ENCODE measurements at regions of chr9 and their contacts with region 1.

Region 1: DNA sequence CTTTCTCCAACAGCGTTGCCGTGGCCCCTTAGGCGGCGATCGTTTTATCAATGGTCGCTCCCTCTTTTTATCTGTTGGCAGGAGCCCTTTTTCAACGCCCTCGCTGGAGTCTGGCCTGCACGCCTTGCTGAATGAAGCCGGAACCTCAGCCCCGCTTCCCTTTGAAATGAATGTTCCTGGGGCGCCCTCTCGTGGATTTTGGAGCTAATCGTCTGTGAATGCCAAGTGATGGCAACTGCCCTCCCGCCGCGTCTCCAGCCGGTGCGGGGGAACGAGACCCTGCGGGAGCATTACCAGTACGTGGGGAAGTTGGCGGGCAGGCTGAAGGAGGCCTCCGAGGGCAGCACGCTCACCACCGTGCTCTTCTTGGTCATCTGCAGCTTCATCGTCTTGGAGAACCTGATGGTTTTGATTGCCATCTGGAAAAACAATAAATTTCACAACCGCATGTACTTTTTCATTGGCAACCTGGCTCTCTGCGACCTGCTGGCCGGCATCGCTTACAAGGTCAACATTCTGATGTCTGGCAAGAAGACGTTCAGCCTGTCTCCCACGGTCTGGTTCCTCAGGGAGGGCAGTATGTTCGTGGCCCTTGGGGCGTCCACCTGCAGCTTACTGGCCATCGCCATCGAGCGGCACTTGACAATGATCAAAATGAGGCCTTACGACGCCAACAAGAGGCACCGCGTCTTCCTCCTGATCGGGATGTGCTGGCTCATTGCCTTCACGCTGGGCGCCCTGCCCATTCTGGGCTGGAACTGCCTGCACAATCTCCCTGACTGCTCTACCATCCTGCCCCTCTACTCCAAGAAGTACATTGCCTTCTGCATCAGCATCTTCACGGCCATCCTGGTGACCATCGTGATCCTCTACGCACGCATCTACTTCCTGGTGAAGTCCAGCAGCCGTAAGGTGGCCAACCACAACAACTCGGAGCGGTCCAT is 10.0 kb downstream of the S1PR3 start:
- ATAC-seq: peak; percentile 74 to 90 (median 84)
- H3K4me3 ChIP-seq: no peak overlapping the region
- H3K27ac ChIP-seq: no peak overlapping the region
- H3K4me1 ChIP-seq: peaks cover 13 to 16% of the 10 kb centered on the region in 2 donors

Region 2: GRCh38 chr9:87678650-87679515 is 1322.4 kb before region 1 on chr9:
- in situ Hi-C with region 1: loop called in 4 of 9 experiments (anchors 10 to 25 kb)
- ATAC-seq: peak; percentile 52 to 75 (median 72)
- H3K4me3 ChIP-seq: no peak overlapping the region
- H3K27ac ChIP-seq: no peak overlapping the region
- H3K4me1 ChIP-seq: peaks cover 3 to 6% of the 10 kb centered on the region in 2 donors

Region 3: GRCh38 chr9:87684627-87685219 is 1316.5 kb before region 1 on chr9:
- in situ Hi-C with region 1: loop called in 4 of 9 experiments (anchors 10 to 25 kb)
- ATAC-seq: peak in 4 of 8 experiments; percentile 38 to 42 (median 39)
- H3K4me3 ChIP-seq: no peak overlapping the region
- H3K27ac ChIP-seq: no peak overlapping the region
- H3K4me1 ChIP-seq: peaks cover 3 to 8% of the 10 kb centered on the region in 2 donors

Region 4: GRCh38 chr9:88583901-88584596 is 417.2 kb before region 1 on chr9:
- in situ Hi-C with region 1: loop called in 4 of 9 experiments (anchors 10 to 25 kb)
- ATAC-seq: peak in 2 of 8 experiments; percentile 34 to 36
- H3K4me3 ChIP-seq: no peak overlapping the region
- H3K27ac ChIP-seq: no peak overlapping the region
- H3K4me1 ChIP-seq: no peaks in the 10 kb centered on the region

Region 5: GRCh38 chr9:89278997-89279739 is 277.9 kb after region 1 on chr9:
- in situ Hi-C with region 1: loop called in 1 of 9 experiments (anchors 25 kb)
- ATAC-seq: peak in 7 of 8 experiments; percentile 22 to 73 (median 36)
- H3K4me3 ChIP-seq: no peak overlapping the region
- H3K27ac ChIP-seq: no peak overlapping the region
- H3K4me1 ChIP-seq: no peaks in the 10 kb centered on the region

Measured in motor neuron (in vitro differentiated cells).